HEK293T (cell line): ENCODE measurements at regions of chr5 and their contacts with region 1.

Region 1: GRCh38 chr5:17189381-17190036 is 27.9 kb upstream of the BASP1 start:
- DNase-seq: peak; percentile 68

Region 2: DNA sequence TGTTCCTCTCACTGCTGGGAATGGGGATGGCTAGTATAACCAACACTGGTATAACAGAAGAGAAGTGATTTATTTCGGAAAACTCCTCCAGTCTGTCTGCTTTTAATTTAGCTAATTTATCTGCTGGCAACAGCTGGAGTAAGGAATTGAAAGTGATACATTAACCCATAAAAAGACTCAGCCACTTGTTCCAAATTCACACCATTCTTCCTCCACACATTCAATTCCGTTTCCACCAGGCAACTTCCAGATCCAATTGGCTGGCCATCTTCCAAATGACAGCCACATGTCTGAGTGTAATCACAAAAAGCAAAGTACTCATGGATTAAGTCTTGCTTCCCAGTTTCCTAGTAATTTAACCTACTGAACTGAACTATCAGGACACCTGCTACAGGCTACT is 495.6 kb before region 1 on chr5:
- CTCF ChIA-PET with region 1: interaction called, 11 read pairs
- POLR2A ChIA-PET with region 1: no interaction called
- DNase-seq: no peak

Region 3: GRCh38 chr5:16791036-16791705 is 398.3 kb before region 1 on chr5:
- CTCF ChIA-PET with region 1: interaction called, 26 read pairs
- POLR2A ChIA-PET with region 1: no interaction called
- DNase-seq: peak; percentile 43

Region 4: GRCh38 chr5:16934123-16934522 is 255.4 kb before region 1 on chr5:
- CTCF ChIA-PET with region 1: interaction called, 22 read pairs
- POLR2A ChIA-PET with region 1: no interaction called
- DNase-seq: peak; percentile 74

Region 5: DNA sequence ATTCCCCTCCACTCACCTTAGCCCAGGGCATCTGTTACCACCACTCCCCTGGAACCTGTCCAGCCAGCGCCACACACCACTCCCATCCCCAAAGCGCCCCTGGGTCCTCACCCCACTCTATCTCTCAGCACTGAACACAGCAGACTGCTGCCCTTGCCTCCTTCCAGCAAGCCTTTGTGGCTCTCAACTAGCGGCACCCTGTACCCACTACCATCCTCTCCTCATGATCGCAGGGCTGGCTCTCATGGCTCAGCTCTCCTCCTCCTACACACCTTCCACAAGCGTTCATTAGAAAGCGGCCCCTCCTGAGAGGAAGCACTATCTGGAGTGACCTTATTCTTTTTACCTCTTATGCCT is 14.6 kb after region 1 on chr5:
- CTCF ChIA-PET with region 1: interaction called, 28 read pairs
- POLR2A ChIA-PET with region 1: no interaction called
- DNase-seq: no peak